Left cardiac atrium (tissue), 4 donors: ENCODE measurements at regions of chr1 and their contacts with region 1.

Region 1: GRCh38 chr1:110460253-110461220 is 9.6 kb downstream of the PROK1 start:
- DNase-seq: peak; percentile 70
- ATAC-seq: peak; percentile 69 to 75

Region 2: GRCh38 chr1:110196917-110197765 is 263.4 kb before region 1 on chr1:
- intact Hi-C with region 1: loop called (anchors 1 to 5 kb)
- DNase-seq: no peak
- ATAC-seq: peak; percentile 71 to 73

Region 3: DNA sequence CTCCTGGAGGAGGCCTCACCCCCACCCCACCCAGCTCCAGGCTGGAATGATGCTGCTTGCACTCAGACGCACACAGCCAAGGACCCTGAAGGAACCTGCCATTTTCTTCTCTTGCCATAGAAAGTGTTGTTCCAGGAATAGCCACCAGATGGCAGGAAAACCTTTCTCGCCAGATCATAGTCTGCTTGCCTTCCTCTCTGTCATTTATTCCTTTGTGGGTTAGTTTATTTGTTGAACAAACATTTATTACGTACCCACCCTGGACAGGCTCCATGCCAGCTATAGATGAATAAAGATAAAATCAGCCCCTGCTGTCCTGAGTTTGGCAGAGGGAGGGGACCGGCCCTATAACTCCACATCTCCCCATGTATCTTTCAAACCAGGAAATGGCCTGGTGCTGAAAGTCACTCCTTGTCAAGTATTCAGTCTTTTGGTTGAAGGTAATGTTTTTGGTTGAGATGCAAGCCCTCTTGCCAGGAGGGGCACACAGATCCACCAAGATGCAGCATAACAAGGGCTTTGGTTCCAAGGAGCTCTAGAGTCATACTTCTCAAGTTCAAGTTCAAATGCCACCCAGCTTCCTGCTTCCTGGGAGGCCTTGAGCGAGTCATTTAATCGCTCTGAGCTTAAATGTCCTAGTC is 257.4 kb before region 1 on chr1:
- intact Hi-C with region 1: loop called (anchors 1 to 5 kb)
- DNase-seq: no peak
- ATAC-seq: peak; percentile 28 to 35

Region 4: DNA sequence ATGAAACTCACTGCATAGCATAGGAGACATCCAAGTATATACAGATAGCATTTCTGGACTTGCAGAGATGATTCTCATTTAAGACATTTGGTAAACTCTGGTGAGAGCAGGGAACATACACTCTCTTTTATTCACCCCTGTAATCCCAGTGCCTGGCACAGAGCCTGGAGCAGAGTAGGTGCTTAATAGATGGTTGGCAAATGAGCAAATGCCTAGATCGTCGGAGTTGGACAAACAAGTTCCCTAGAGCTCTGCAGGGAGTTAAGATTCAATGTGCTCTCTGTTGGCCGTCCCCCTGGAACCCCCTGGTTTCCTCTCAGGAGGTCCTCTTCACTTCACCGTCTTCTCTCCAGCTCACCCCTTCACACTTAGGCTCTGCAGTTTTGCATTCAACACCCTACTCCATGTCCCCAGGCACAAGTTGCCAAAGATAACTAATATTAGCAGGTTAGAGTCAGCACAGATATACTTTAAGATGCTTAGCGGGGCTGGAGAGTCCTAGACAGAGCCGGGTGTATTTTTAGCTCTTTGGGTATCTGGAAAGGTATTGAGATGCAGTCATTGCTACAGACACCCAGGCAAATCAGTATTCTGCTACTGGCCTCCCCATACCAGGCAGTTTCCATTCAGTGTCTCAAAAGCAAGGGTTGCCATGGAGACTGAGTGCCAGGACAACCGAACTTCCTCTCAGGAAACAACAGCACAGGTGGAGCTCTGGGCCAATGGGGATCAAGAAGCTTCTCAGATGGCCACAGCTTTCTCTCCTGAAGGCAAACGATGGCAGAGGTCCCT is 205.3 kb before region 1 on chr1:
- intact Hi-C with region 1: no loop called
- DNase-seq: no peak
- ATAC-seq: peak; percentile 34 to 69

Region 5: DNA sequence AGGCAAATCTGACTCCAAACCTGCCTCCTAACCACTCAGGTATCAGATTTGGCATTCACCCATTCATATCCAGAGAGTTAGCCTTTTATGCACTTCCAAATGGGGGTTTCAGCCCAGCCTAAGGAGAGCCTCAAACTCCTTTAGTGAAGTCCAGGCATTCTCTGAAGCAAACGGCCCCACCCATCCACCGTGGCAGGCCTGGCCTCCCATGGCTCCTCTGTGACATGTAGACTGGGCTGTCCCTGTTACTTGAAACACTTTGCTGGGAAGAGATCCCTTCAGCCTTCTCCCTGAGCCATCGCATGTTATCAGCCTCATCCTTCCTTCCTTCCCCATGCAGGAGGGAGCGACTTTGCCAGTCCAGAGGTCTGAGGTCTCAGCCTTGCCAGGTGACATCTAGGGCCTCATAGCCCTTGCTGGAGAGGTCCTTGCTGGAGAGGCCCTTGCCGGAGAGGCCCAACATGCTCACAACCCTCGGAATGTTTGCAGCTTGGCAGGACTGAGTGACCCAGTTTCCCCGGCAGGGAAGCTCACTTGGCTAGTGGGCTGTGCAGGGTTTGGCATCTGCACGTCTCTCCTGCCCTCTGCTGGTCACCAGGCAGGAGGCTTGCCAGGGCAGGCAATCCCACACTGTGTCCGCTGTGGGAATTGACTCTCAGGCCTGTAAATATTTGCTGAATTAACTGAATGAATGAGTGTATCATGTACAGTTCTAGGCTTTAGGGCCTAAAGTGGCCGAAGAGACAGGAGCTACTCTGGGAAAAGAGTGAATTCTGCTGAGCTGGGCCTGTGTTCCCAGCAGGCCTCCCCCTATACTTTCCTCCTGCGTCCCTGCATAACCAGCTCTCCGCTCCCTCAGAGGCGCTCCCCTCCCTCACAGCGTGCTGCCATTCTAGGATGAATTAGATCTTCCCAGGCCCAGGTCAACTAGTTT is 148.1 kb before region 1 on chr1:
- intact Hi-C with region 1: loop called (anchors 5 to 10 kb)
- DNase-seq: peak; percentile 86
- ATAC-seq: peak; percentile 85 to 95

Region 6: GRCh38 chr1:110412576-110412975 is 48.0 kb before region 1 on chr1:
- intact Hi-C with region 1: loop called (anchors 1 to 2 kb)
- DNase-seq: peak; percentile 86
- ATAC-seq: peak; percentile 66 to 85

Region 7: DNA sequence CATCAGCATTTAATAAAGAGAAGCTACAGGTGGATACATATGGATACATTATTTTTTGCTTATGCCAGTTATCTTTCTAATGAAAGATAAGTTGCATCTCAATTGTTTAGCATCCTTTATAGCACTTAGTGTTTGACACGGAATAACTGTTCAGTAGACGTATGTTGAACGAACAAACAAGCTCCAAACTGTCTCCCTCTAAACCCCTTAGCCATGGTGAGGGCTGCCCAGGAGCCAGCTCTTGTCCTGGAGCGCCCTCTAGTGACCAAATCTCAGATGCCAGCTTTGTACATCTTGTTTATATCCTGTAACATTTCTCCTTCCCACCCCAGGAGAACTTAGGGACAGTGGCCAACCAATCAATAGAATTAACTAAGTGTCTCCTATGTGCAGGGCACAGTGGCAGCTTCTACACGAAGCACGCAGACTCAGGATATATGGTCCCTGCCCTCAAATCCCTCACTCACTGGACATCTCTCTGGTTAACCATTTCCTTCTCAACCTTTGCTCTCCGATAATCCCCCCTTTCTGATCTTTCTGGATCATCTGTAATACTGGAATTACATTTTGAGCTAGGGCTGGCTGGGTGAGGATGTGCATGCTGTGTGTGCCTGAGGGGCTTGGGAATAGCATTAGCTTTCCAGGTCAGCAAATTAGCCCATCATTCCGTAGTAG is 35.5 kb after region 1 on chr1:
- intact Hi-C with region 1: loop called in 1 of 2 experiments (anchors 2 kb)
- DNase-seq: peak; percentile 83
- ATAC-seq: peak; percentile 81 to 89